ENCODE measurements at regions of chr5 and their contacts with region 1.

Region 1: GRCh38 chr5:55402199-55402598 is 94.4 kb downstream of the MTREX start:
- DNase-seq: no peak
- H3K27ac ChIP-seq: no peak overlapping the region
- CTCF ChIP-seq: no peak

Region 2: DNA sequence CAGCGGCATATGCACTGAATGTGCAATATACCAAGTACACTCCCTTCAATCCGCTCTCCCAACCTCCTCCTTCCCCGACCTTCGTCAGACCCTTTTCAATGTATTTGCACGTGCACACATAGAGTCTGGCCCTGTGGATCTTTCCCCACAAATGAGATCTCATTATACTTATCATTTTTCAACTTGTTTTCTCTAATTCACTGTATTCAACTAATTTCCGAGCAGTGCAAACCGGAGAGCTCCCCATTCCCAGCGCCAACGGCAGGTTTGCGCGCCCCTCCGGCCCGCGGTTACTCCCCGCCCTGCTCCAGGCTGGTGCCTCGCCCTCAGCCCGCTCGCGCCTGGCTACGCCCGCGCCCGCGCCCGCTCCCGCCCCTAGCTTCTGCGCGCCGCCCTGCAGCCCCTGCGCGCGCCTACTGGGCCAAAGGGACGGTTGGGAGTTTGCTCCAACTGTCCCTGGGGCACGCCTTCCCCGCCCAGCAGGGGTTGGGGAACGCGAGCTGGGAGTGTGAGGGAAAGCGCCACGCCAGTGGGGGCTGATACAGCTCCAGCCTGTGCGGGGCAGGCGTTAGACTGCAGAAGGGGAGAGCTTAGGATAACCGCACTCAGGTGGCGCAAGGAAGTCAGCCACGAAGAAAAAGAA is 225.9 kb before region 1 on chr5:
- CTCF ChIA-PET with region 1: no interaction called
- POLR2A ChIA-PET with region 1: no interaction called
- DNase-seq: peak; percentile 75
- H3K27ac ChIP-seq: peak overlapping the region; percentile 43
- CTCF ChIP-seq: peak; percentile 38; the same call in 1 of the 2 replicates

Region 3: DNA sequence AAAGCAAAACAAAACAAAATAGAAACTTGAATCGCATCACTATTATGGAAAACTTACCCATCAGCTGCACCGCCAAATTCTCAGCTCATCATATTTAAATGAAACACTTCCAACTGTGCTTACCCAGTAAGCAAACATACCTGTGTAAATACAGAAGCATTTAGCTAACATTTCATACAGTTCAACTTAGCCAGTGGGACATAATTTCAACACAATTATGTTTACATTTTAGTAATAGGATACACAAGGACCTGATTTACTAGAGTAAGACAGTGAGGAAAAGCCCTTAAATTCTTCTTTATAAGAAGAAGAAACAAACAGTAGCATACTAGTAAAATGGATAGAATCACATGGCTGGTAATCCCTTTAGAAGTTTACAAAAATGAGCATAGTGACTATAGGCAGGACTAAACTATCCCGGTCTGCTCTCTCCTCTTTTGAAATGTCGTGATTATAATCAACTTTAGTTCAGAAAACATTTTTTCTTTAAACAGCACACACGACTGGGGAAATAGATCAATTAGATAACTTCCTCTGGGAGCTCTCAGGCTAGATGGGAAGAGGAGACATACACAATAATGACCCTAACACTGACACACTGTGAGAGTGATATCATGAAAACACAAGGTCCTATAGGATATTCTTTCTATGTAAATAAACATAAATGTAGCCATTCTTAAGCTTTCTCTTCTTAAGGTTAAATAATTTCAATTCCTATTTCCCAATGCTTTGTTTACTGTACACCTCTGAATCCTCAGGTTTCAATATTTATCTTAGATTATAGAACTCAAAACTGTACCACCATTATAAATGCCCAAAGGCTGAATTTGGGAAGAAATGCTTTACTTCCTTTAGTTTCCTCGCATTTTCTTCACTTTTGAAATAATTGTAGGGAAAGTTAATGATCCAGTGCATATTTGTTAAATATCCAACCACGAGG is 213.3 kb before region 1 on chr5:
- CTCF ChIA-PET with region 1: no interaction called
- POLR2A ChIA-PET with region 1: no interaction called
- DNase-seq: no peak
- H3K27ac ChIP-seq: no peak overlapping the region
- CTCF ChIP-seq: no peak

Region 4: GRCh38 chr5:55387874-55388273 is 14.3 kb before region 1 on chr5:
- CTCF ChIA-PET with region 1: interaction called, 10 read pairs
- POLR2A ChIA-PET with region 1: no interaction called
- DNase-seq: no peak
- H3K27ac ChIP-seq: no peak overlapping the region
- CTCF ChIP-seq: no peak

Region 5: DNA sequence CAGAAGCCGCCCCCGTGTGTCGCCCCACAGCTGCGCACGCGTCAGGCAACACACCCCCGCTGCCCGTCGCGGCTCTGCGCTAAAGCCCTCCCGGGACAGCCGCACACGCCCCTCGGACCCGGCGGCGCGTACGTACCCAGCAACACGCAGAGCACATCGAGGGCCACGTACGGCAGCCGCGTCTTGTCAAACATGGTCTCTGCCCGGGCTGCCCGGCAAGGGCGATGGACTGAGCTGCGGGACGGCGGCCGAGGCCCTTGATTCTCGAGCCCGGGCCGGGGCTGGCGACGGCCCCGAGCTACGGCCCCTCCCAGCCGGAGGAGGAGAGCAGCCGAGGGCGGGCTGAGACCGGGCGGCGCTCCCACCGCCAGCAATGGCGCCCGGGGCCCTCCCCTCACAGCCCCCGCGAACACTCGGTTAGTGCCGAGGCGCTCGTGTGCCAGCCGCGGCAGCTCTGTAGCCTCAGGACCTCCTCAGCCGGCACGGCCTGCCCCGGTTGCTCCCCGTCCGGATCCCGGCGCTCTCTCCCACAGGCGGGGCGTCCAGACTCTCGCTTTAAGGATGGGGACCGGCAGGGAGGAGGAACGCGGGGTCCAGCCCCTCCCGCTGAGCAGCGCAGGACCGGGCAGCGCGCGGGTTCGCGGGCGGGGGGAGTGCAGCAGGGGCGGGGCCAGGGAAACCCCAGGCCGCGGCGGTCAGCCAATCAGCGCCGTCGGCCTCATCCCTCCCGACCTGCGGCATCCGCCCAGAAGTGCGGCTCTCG is 132.4 kb after region 1 on chr5 and contains the start of gene PLPP1:
- CTCF ChIA-PET with region 1: no interaction called
- POLR2A ChIA-PET with region 1: no interaction called
- DNase-seq: peak; percentile 96
- H3K27ac ChIP-seq: peak within 1 kb of the TSS; percentile 93
- CTCF ChIP-seq: 0 out of 2 replicates have a peak, but pooled peaks have one; percentile 9

Measured in RWPE1 (cell line).